Dendritic cell treated with granulocyte-macrophage colony-stimulating factor and Interleukin-4, amounts not matched to agents 40 ng/mL and 50 ng/mL, for 4 days (primary cell): ENCODE measurements at regions of chr1 and their contacts with region 1.

Region 1: DNA sequence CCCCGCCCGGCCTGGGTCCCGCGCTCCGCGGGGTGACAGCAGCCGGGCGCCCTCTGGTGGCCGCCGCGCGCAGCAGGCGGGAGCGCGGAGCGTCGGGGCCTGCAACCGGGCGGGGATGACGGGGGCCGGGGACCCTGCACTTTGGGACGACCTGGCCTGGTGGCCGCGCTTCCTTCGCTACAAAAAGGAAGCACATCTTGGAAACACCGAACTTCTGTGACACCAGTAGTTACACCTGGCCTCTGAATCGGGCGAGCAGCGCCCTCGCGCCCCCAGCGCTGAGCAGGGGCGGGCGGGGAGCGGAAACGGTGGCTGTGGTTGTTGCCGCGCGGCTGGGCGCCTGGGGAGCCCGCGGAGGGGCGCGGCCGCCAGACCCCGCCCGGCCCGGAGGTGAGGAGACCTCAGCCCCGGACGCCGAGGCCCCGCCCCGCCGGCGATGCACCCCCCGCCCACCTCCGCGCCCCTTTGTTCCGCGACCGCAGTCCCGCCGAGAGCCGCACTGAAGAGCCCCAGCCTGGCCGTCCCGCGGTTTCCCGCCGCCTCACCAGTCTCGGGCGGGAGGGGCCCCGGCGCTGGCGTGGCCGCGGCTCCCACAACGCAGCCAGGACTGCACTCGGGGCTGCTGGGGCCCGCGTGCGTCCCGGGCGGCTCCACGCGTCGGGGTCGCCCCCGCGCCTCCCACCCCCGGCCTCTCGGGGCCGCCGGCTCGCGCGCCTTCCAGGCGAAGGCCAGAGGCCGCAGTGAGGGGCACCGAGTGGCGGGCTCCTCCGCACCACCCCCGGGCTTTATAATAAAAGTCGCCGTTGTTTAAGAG is 59.3 kb downstream of the H3-3A start:
- H3K4me3 Mint-ChIP-seq: peak overlapping the region; percentile 74
- H3K27ac Mint-ChIP-seq: peak overlapping the region; percentile 78
- H3K4me1 Mint-ChIP-seq: peaks cover 27% of the 10 kb centered on the region
- H3K27me3 Mint-ChIP-seq: peaks cover 49% of the 10 kb centered on the region

Region 2: DNA sequence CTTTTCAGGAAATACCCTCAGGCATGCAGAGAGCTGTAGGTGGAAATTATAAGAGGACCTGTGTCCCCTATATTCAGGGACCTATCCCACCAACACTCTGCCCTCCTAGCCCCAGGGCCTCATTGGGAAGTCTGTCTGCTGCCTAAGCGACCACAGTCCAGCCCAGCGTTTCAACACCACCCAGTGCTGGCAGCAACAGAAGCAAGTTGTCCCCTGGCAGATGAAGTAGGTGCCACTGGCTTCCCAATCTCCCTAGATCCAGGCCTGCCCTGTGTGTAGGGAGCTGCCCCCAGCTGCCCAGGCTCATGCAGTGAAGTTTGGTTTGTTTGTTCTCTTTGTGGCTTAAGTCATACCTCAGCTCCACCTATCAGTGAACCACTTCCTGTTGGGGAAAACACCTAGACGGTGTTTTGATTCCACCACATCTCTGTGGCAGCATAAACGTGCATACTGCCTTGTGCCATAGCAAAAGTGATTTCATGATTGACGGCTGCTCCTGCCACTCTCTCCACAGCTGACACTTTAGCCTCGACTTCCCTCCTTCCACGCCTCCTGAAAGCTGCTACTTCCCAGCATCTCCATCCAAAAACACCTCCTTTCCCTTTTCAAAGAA is 224.8 kb before region 1 on chr1:
- intact Hi-C with region 1: no loop called
- H3K4me3 Mint-ChIP-seq: no peak overlapping the region
- H3K27ac Mint-ChIP-seq: no peak overlapping the region
- H3K4me1 Mint-ChIP-seq: peaks cover 7% of the 10 kb centered on the region
- H3K27me3 Mint-ChIP-seq: no peaks in the 10 kb centered on the region

Region 3: DNA sequence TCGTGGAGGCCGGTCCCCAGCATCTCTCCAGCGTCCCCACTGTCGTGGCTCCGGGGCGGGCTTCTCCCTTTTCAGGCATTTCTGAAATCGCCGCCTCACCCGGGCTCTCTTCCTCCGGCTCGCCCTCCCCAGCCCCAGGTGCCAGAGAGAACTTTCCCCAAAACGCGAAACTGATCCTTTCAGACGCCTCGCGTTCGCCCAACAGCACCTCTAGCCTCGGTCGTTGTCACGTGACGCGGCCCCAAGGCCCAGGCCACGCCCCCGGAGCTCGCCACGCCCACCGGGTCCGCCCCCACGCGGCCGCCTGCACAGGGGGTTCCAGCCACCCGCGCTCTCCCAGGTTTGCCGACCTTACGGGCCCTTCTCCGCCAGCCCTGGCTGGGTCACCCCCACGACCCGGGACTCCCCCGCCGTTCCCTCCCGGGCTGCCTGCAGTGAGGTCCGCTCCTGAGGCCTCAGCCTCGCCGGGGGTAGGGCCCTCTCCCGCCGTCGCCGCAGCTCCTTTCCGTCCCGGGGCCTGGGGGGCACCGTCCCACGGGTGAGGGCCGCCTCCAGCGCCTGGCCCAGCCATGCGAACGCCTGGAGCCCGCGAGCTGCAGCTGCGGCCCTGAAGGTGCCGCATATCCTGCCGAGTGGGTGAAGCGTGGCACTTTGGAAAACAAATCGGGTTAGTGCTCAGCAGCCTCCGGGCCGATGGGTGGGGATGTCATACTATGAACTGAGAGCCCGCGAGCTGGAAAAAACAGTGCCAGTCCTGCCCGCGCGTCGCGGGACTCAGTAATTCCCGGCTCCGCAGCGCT is 38.3 kb before region 1 on chr1:
- intact Hi-C with region 1: loop called (anchors 1 kb)
- H3K4me3 Mint-ChIP-seq: peak overlapping the region; percentile 90
- H3K27ac Mint-ChIP-seq: peak overlapping the region; percentile 84
- H3K4me1 Mint-ChIP-seq: peaks cover 10% of the 10 kb centered on the region
- H3K27me3 Mint-ChIP-seq: peaks cover 23% of the 10 kb centered on the region

Region 4: GRCh38 chr1:226109829-226110248 is 12.0 kb before region 1 on chr1:
- intact Hi-C with region 1: loop called (anchors 1 kb)
- H3K4me3 Mint-ChIP-seq: peak overlapping the region; percentile 82
- H3K27ac Mint-ChIP-seq: peak overlapping the region; percentile 96
- H3K4me1 Mint-ChIP-seq: peaks cover 35% of the 10 kb centered on the region
- H3K27me3 Mint-ChIP-seq: peaks cover 9% of the 10 kb centered on the region

Region 5: DNA sequence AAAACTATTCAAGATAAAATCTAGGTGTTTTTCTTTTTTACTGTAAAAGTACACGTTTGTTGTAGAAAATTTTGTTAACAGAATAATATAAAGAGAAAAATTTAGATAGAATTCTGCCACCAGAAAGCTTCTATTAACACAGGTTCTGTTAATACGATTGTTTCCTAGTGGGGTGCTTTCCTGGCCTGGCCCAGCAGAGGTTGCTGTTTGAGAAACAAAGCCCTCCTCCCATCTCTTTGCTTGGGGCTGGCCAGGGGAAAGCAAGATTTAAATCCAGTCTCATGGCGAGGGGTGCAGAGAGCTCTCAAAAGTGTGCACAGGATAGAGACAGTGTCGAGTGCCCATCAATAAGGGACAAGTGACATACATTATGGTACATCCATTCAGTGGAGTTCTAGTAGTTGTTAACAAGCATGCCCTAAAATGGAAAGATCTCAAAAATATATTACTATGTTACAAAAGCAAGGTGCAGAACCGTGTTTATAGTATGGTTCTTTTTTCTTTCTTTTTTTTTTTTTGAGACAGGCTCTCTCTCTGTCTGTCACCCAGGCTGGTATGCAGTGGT is 79.3 kb after region 1 on chr1:
- intact Hi-C with region 1: loop called (anchors 1 kb)
- H3K4me3 Mint-ChIP-seq: no peak overlapping the region
- H3K27ac Mint-ChIP-seq: no peak overlapping the region
- H3K4me1 Mint-ChIP-seq: peaks cover 7% of the 10 kb centered on the region
- H3K27me3 Mint-ChIP-seq: no peaks in the 10 kb centered on the region

Region 6: DNA sequence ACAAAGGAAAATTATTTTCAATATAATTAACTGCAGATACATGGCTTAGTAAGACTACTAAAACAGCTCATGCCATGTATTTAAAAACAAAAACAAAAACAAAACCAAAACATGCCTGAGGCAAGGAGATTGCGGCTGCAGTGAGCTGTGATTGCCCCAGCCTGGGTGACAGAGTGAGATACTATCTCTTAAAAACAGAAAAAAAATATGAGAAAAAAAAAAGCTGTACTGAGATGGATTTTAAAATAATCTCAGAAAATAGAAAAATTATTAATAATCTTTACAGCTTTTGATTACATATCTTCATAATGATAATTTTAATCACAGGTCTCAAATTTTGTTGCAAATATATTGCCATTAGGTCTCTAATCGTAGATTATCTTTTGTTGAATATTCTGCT is 211.2 kb after region 1 on chr1:
- intact Hi-C with region 1: loop called (anchors 5 kb)
- H3K4me3 Mint-ChIP-seq: no peak overlapping the region
- H3K27ac Mint-ChIP-seq: no peak overlapping the region
- H3K4me1 Mint-ChIP-seq: peaks cover 5% of the 10 kb centered on the region
- H3K27me3 Mint-ChIP-seq: no peaks in the 10 kb centered on the region